ENCODE measurements at regions of chr7 and their contacts with region 1.

Region 1: GRCh38 chr7:129952653-129953560 is at the start of gene UBE2H:
- DNase-seq: peak; percentile 78 to 91 (median 86)
- ATAC-seq: peak; percentile 90
- H3K4me3 ChIP-seq: peak within 1 kb of the TSS; percentile 80
- H3K4me3 Mint-ChIP-seq: peak within 1 kb of the TSS in 8 of 10 donors; percentile 2 to 100 (median 98)
- H3K27ac ChIP-seq: peak within 1 kb of the TSS; percentile 99
- H3K27ac Mint-ChIP-seq: peak within 1 kb of the TSS in 6 of 9 donors; percentile 98 to 100 (median 99)
- H3K4me1 ChIP-seq: peaks cover 14 to 28% of the 10 kb centered on the region in 2 donors
- H3K4me1 Mint-ChIP-seq: peaks cover 0 to 13% (median 6%) of the 10 kb centered on the region in 7 donors
- H3K27me3 ChIP-seq: no peaks in the 10 kb centered on the region
- H3K27me3 Mint-ChIP-seq: peaks cover 0 to 9% (median 0%) of the 10 kb centered on the region in 5 donors
- total RNA-seq, gene UBE2H: 32.0 to 69.2 (median 49.1) TPM

Region 2: GRCh38 chr7:128409596-128410160 is 1543.2 kb before region 1 on chr7 and contains the start of gene IMPDH1:
- CTCF ChIA-PET with region 1: no interaction called
- POLR2A ChIA-PET with region 1: no interaction called
- intact Hi-C with region 1: loop called in 1 of 2 experiments (anchors 5 kb)
- DNase-seq: peak; percentile 73 to 95 (median 83)
- ATAC-seq: peak; percentile 87
- H3K4me3 ChIP-seq: peak within 1 kb of the TSS; percentile 89
- H3K4me3 Mint-ChIP-seq: peak within 1 kb of the TSS; percentile 88 to 95 (median 92)
- H3K27ac ChIP-seq: peak within 1 kb of the TSS; percentile 81
- H3K27ac Mint-ChIP-seq: peak within 1 kb of the TSS; percentile 87 to 93 (median 90)
- H3K4me1 ChIP-seq: peaks cover 15 to 27% of the 10 kb centered on the region in 2 donors
- H3K4me1 Mint-ChIP-seq: peaks cover 12 to 41% (median 38%) of the 10 kb centered on the region in 7 donors
- H3K27me3 ChIP-seq: no peaks in the 10 kb centered on the region
- H3K27me3 Mint-ChIP-seq: peaks cover 0 to 26% (median 0%) of the 10 kb centered on the region in 5 donors
- total RNA-seq, gene IMPDH1: 36.5 to 92.0 (median 44.4) TPM

Region 3: GRCh38 chr7:129054438-129055293 is 898.2 kb before region 1 on chr7 and contains the start of gene TNPO3:
- CTCF ChIA-PET with region 1: no interaction called
- POLR2A ChIA-PET with region 1: no interaction called
- intact Hi-C with region 1: loop called in 1 of 2 experiments (anchors 5 kb)
- DNase-seq: peak; percentile 76 to 90 (median 85)
- ATAC-seq: peak; percentile 92
- H3K4me3 ChIP-seq: peak within 1 kb of the TSS; percentile 96
- H3K4me3 Mint-ChIP-seq: peak within 1 kb of the TSS; percentile 91 to 99 (median 99)
- H3K27ac ChIP-seq: peak within 1 kb of the TSS; percentile 92
- H3K27ac Mint-ChIP-seq: peak within 1 kb of the TSS; percentile 96 to 100 (median 99)
- H3K4me1 ChIP-seq: peaks cover 15 to 18% of the 10 kb centered on the region in 2 donors
- H3K4me1 Mint-ChIP-seq: peaks cover 17 to 51% (median 39%) of the 10 kb centered on the region in 7 donors
- H3K27me3 ChIP-seq: peaks cover 0 to 3% of the 10 kb centered on the region in 2 donors
- H3K27me3 Mint-ChIP-seq: peaks cover 4 to 13% (median 4%) of the 10 kb centered on the region in 5 donors
- total RNA-seq, gene TNPO3: 28.6 to 40.6 (median 39.6) TPM

Region 4: GRCh38 chr7:129494041-129494440 is 458.9 kb before region 1 on chr7:
- CTCF ChIA-PET with region 1: no interaction called
- POLR2A ChIA-PET with region 1: no interaction called
- intact Hi-C with region 1: loop called in 1 of 2 experiments (anchors 2 kb)
- DNase-seq: no peak
- ATAC-seq: peak; percentile 38
- H3K4me3 ChIP-seq: no peak overlapping the region
- H3K4me3 Mint-ChIP-seq: no peak overlapping the region
- H3K27ac ChIP-seq: no peak overlapping the region
- H3K27ac Mint-ChIP-seq: peak overlapping the region in 1 of 9 donors; percentile 85
- H3K4me1 ChIP-seq: no peaks in the 10 kb centered on the region
- H3K4me1 Mint-ChIP-seq: peaks cover 0 to 30% (median 0%) of the 10 kb centered on the region in 7 donors
- H3K27me3 ChIP-seq: no peaks in the 10 kb centered on the region
- H3K27me3 Mint-ChIP-seq: peaks cover 0 to 2% (median 0%) of the 10 kb centered on the region in 5 donors

Region 5: DNA sequence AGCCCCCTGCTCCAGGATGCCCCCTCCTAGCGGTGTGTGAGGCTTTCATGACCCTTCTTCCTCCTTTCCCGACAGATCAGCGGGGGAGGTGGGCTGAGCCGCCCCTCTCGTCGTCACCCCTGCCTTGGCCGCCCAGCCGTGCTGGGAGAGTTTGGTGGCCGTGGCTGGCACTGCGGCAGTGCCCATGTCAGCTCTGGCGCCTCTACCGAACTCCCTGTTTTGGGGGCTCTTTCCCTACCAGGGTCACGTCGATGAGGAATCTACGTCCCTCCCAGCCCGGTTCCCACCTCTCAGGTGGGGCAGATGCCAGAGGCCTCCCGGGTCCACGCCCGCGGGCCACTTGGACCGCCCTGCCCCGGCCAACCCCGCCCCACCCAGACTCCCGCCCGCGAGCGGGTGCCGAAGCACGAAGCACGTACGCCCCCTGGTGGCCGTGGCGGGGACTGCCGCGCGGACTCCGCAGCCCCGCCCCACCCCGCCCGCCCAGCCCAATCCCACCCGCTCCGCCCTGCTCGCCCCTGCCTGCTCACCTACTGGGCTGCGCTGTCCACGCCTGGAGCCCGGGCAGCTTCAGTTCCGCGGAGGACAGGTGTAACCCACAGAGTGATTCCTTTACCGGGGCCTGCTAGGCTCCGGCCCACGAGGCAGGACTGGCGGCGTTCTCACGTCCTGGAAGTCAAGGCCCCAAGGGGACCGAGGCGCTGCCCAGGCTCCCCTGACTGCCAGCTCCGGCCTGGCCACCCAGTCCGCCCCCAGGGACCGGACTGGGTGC is 127.2 kb before region 1 on chr7:
- CTCF ChIA-PET with region 1: interaction called, 7 read pairs
- POLR2A ChIA-PET with region 1: interaction called, 3 read pairs
- intact Hi-C with region 1: loop called (anchors 1 to 2 kb)
- DNase-seq: peak; percentile 66 to 97 (median 82)
- ATAC-seq: peak; percentile 95
- H3K4me3 ChIP-seq: peak overlapping the region; percentile 74
- H3K4me3 Mint-ChIP-seq: peak overlapping the region; percentile 80 to 97 (median 88)
- H3K27ac ChIP-seq: no peak overlapping the region
- H3K27ac Mint-ChIP-seq: peak overlapping the region in 7 of 9 donors; percentile 33 to 85 (median 71)
- H3K4me1 ChIP-seq: no peaks in the 10 kb centered on the region
- H3K4me1 Mint-ChIP-seq: peaks cover 12 to 25% (median 19%) of the 10 kb centered on the region in 7 donors
- H3K27me3 ChIP-seq: no peaks in the 10 kb centered on the region
- H3K27me3 Mint-ChIP-seq: peaks cover 0 to 8% (median 0%) of the 10 kb centered on the region in 5 donors

Region 6: GRCh38 chr7:130050773-130051125 is 97.8 kb after region 1 on chr7:
- CTCF ChIA-PET with region 1: no interaction called
- POLR2A ChIA-PET with region 1: no interaction called
- intact Hi-C with region 1: loop called (anchors 2 to 5 kb)
- DNase-seq: no peak
- ATAC-seq: no peak
- H3K4me3 ChIP-seq: peak overlapping the region; percentile 86
- H3K4me3 Mint-ChIP-seq: peak overlapping the region; percentile 94 to 99 (median 98)
- H3K27ac ChIP-seq: peak overlapping the region; percentile 78
- H3K27ac Mint-ChIP-seq: peak overlapping the region; percentile 90 to 99 (median 95)
- H3K4me1 ChIP-seq: peaks cover 5 to 8% of the 10 kb centered on the region in 2 donors
- H3K4me1 Mint-ChIP-seq: peaks cover 6 to 29% (median 14%) of the 10 kb centered on the region in 7 donors
- H3K27me3 ChIP-seq: no peaks in the 10 kb centered on the region
- H3K27me3 Mint-ChIP-seq: peaks cover 0 to 3% (median 0%) of the 10 kb centered on the region in 5 donors

Region 7: DNA sequence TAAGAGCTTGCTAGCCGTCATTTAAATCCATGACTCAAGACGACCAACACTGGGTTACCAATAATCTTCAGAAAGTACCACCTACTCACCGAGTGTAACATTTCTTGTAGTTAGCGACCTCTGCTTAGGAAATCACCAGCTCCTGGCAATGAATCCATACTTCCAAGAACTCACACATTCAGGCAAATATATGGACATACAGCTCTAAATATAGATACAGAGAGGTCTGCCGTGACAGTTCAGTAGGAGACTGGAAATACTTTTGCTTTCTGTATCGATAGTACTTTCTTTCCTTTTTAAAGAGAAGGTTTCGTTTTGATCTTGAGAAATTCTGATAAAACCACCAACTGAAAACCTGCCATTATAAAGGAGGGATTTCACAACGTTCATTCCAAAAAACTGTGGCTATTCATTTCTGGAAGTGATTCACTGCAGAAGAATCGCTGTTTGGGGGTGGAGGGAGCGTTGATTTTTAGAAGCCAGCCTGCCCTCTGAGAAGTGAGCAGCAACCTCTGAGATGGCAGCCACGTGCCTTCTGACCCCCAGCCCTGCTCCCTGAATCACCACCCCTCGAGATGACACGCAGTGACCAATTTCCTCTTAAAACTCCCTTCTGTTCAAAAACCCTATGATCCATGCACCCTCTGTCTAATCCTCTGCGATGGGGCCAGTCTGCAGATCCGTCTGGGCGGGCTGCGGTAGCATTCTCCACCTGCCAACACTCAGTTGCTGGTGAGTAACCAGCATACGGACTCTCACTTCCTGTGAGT is 960.1 kb after region 1 on chr7:
- CTCF ChIA-PET with region 1: no interaction called
- POLR2A ChIA-PET with region 1: no interaction called
- intact Hi-C with region 1: loop called in 1 of 2 experiments (anchors 2 kb)
- DNase-seq: peak; percentile 49 to 91 (median 75)
- ATAC-seq: peak; percentile 90
- H3K4me3 ChIP-seq: peak overlapping the region; percentile 66
- H3K4me3 Mint-ChIP-seq: peak overlapping the region; percentile 80 to 100 (median 94)
- H3K27ac ChIP-seq: peak overlapping the region; percentile 88
- H3K27ac Mint-ChIP-seq: peak overlapping the region; percentile 86 to 98 (median 95)
- H3K4me1 ChIP-seq: peaks cover 46 to 73% of the 10 kb centered on the region in 2 donors
- H3K4me1 Mint-ChIP-seq: peaks cover 53 to 93% (median 89%) of the 10 kb centered on the region in 7 donors
- H3K27me3 ChIP-seq: no peaks in the 10 kb centered on the region
- H3K27me3 Mint-ChIP-seq: no peaks in the 10 kb centered on the region